Cardiac septum (tissue), 1 donor: ENCODE measurements at regions of chr10 and their contacts with region 1.

Region 1: GRCh38 chr10:6144406-6145165 is 55.8 kb downstream of the RBM17 start:
- DNase-seq: peak; percentile 97

Region 2: GRCh38 chr10:6114805-6115341 is 29.7 kb before region 1 on chr10:
- intact Hi-C with region 1: loop called (anchors 5 kb)
- DNase-seq: no peak

Region 3: DNA sequence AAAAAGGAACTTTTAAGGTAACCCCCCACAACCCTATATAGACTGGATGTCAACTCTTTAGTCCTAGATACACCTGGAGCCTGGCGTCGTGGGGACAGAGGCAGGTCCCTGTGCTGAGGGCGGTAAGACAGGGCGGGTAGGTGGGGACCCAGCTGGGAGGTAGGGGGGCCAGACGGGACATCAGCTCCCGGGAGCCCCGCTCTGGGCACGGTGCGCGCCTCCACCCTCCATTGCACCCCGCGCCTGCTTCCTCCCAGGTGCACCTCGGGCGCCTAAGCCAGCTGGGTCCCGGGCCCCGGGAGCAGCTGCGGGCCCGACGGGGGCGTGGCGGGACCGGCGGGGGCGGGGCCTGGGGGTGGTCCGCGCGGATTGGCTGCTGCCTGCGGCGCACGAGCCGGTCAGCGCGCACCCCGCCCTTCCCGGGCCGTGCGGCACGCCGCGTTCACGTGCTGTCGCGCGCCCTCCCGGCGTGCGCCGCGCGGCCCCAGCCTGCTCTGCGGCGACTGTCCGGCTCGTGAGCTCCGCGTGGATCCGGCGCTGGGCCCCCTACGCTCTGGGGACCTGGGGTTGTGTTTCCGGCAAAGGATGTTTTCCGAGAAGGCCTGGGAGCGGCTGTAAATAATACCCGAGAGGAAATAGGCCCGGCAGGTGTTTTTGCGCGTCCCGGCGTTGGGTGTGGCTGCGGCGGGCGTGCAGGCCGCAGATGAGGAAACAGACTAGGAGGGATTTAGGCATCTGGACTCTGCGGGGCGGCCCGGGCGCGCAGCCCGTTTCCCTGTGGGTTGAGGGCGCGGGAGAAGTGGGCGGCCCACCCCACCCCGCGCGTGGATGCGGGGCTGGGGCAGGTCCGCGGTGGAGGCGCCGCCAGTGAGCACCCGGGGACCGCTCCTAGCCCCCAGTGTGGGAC is 19.0 kb after region 1 on chr10:
- intact Hi-C with region 1: loop called (anchors 1 kb)
- DNase-seq: peak; percentile 95